Activated CD4-positive, alpha-beta memory T cell treated with anti-CD3 and anti-CD28 coated beads for 36 hours (primary cell): ENCODE measurements at regions of chr7 and their contacts with region 1.

Region 1: DNA sequence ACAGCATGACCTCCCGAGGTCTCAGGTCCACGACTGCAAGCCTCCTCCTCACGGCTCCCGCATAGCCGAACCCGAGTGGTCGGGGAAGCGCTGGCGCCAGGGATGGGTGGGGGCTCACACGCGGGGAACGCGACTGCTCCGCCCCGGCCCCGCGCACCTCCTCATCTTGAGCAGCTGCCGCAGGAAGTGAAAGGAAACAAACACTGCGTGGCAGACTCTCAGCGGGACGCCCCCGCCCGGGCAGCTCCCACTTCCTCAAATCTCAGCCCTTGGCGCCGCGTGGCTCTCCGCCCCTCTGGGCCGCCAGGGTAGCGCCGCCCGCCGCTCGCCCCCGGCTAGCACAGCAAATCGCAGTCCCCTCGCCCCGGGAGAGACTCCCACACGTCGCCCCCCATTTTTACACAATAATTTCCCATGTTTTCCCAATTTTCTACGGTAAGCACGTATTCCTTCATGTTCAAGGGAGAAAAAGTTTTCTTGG is at the start of gene TMEM243:
- DNase-seq: peak; percentile 90
- H3K4me3 Mint-ChIP-seq: peak within 1 kb of the TSS; percentile 99
- H3K27ac Mint-ChIP-seq: peak within 1 kb of the TSS; percentile 96
- H3K4me1 Mint-ChIP-seq: peaks cover 32% of the 10 kb centered on the region
- H3K27me3 Mint-ChIP-seq: no peaks in the 10 kb centered on the region
- total RNA-seq, gene TMEM243: 44.7 to 47.8 TPM

Region 2: DNA sequence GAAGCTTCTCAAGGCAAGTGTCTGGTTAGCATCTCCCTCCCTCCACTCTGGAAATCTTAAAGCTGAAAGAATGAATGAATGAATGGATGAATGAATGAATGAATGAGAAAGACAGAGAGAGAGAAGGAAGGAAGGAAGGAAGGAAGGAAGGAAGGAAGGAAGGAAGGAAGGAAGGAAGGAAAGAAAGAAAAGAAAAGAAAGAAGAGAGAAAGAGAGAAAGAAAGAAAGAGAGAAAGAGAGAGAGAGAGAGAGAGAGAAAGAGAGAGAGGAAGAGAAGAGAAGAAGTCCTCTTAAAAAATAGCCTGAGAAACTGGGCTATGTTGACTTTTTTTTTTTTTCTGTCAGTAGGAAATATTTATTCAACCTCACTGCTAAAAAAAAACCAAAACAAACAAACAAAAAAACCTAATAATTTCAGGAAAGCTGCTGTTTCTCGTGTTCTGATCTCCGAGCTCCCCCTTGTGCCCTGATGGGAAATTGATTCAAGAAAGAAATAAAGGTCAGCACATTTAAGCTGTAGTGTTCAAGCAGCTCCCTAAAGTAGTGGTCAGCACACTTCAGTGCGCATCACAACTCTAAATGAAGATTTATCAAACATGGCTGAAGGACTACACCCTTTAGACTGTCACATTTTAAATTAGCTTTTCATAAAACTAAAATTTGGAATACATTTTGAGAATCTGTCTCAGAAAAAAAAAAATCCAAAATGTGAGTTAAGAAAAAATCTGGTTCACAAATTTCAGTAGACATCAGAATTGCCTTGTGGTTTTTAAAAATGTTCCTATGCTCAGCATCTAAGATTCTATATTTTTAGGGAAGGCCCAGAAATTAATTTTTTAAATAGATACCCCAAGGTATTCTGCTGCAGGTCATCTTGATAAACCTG is 314.4 kb before region 1 on chr7:
- CTCF ChIA-PET with region 1: no interaction called
- POLR2A ChIA-PET with region 1: no interaction called
- intact Hi-C with region 1: no loop called
- DNase-seq: no peak
- H3K4me3 Mint-ChIP-seq: no peak overlapping the region
- H3K27ac Mint-ChIP-seq: no peak overlapping the region
- H3K4me1 Mint-ChIP-seq: peaks cover 3% of the 10 kb centered on the region
- H3K27me3 Mint-ChIP-seq: no peaks in the 10 kb centered on the region

Region 3: DNA sequence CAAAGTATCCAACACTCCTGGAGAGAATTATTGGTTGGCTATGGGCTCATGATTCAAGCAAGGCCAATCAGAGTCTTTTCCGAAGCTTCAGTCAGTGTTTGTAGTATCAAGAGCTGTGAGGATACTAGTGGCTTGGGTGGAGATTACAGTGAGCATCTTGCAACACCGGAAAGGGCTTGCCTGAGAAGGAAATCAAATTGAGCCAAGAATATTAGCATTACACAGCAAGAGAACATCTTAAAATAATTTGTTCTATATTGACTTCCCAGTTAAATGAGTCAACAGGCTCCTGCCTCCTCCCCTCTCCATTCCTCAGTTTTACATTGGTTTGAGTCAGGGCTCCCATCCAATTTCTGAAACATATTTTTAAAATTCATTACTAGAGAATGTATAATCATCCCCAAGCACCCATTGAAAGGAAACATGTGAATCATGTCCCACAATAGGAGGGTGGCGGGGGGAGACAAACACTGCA is 287.5 kb before region 1 on chr7:
- CTCF ChIA-PET with region 1: interaction called, 3 read pairs
- POLR2A ChIA-PET with region 1: interaction called, 6 read pairs
- intact Hi-C with region 1: loop called (anchors 2 kb)
- DNase-seq: peak; percentile 27
- H3K4me3 Mint-ChIP-seq: no peak overlapping the region
- H3K27ac Mint-ChIP-seq: no peak overlapping the region
- H3K4me1 Mint-ChIP-seq: peaks cover 9% of the 10 kb centered on the region
- H3K27me3 Mint-ChIP-seq: no peaks in the 10 kb centered on the region

Region 4: GRCh38 chr7:87059525-87060287 is 159.9 kb before region 1 on chr7 and contains the start of gene ELAPOR2:
- CTCF ChIA-PET with region 1: interaction called, 4 read pairs
- POLR2A ChIA-PET with region 1: interaction called, 3 read pairs
- intact Hi-C with region 1: loop called (anchors 1 kb)
- DNase-seq: peak; percentile 86
- H3K4me3 Mint-ChIP-seq: peak within 1 kb of the TSS; percentile 76
- H3K27ac Mint-ChIP-seq: no peak within 1 kb of the TSS
- H3K4me1 Mint-ChIP-seq: peaks cover 11% of the 10 kb centered on the region
- H3K27me3 Mint-ChIP-seq: peaks cover 7% of the 10 kb centered on the region
- total RNA-seq, gene ELAPOR2: 4.0 to 4.1 TPM

Region 5: GRCh38 chr7:87188930-87189329 is 30.7 kb before region 1 on chr7:
- CTCF ChIA-PET with region 1: interaction called, 3 read pairs
- POLR2A ChIA-PET with region 1: interaction called, 8 read pairs
- intact Hi-C with region 1: loop called (anchors 5 kb)
- DNase-seq: no peak
- H3K4me3 Mint-ChIP-seq: no peak overlapping the region
- H3K27ac Mint-ChIP-seq: peak overlapping the region; percentile 2
- H3K4me1 Mint-ChIP-seq: peaks cover 28% of the 10 kb centered on the region
- H3K27me3 Mint-ChIP-seq: no peaks in the 10 kb centered on the region

Region 6: GRCh38 chr7:87231256-87231655 is 11.7 kb after region 1 on chr7:
- CTCF ChIA-PET with region 1: interaction called, 12 read pairs
- POLR2A ChIA-PET with region 1: interaction called, 3 read pairs
- intact Hi-C with region 1: loop called (anchors 2 kb)
- DNase-seq: no peak
- H3K4me3 Mint-ChIP-seq: no peak overlapping the region
- H3K27ac Mint-ChIP-seq: no peak overlapping the region
- H3K4me1 Mint-ChIP-seq: peaks cover 8% of the 10 kb centered on the region
- H3K27me3 Mint-ChIP-seq: no peaks in the 10 kb centered on the region

Region 7: GRCh38 chr7:87876040-87876868 is 656.7 kb after region 1 on chr7 and contains the starts of genes DBF4 and SLC25A40:
- CTCF ChIA-PET with region 1: no interaction called
- POLR2A ChIA-PET with region 1: no interaction called
- intact Hi-C with region 1: loop called (anchors 2 kb)
- DNase-seq: peak; percentile 97
- H3K4me3 Mint-ChIP-seq: peak within 1 kb of the TSS; percentile 77
- H3K27ac Mint-ChIP-seq: peak within 1 kb of the TSS; percentile 93
- H3K4me1 Mint-ChIP-seq: peaks cover 43% of the 10 kb centered on the region
- H3K27me3 Mint-ChIP-seq: no peaks in the 10 kb centered on the region
- total RNA-seq, gene DBF4: 75.8 to 78.4 TPM
- total RNA-seq, gene SLC25A40: 47.9 to 54.9 TPM

Region 8: GRCh38 chr7:88219781-88220747 is 1000.5 kb after region 1 on chr7 and contains the start of gene SRI:
- CTCF ChIA-PET with region 1: no interaction called
- POLR2A ChIA-PET with region 1: no interaction called
- intact Hi-C with region 1: loop called (anchors 5 kb)
- DNase-seq: peak; percentile 92
- H3K4me3 Mint-ChIP-seq: peak within 1 kb of the TSS; percentile 87
- H3K27ac Mint-ChIP-seq: peak within 1 kb of the TSS; percentile 89
- H3K4me1 Mint-ChIP-seq: peaks cover 15% of the 10 kb centered on the region
- H3K27me3 Mint-ChIP-seq: no peaks in the 10 kb centered on the region
- total RNA-seq, gene SRI: 219 to 220 TPM